AG04449 (cell line): ENCODE measurements at regions of chr13 and their contacts with region 1.

Region 1: DNA sequence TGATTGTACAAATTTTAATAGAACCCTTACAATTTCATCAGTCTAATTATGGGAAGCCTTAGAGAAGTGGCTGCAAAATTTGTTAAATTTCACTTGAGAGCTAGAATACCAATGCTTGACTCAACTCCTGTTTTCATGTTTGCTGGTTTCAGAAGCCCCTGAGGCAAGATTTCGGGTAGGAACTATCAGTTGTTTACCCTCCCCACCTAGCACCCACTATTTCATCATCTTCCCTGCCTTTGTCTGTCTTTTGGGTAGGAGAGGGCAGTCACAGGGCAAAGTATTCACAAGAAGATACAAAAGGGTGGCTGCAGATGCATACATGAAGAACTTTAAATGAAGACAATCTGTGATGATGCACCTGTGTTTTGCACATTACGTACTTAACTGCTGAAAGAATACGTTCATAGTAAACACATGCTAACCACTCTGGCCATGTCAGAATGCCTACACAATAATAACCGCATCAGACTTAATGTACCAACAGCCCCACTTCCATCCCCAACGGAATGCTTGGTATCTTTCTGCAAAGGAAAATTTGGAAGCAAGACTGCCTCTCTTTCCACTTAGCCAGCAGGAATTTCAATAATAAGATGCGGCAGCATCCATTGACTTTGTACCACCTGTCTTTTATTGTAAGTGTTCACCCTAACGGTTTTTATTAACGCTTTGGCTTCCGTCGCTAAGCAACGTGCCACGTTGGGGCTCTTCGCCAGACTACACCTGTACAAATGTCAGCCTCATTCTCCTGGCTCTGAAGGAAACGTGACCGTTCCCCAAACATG is 30.4 kb downstream of the TPT1 start:
- DNase-seq: no peak
- H3K4me3 ChIP-seq: peak overlapping the region; percentile 23; the same call in 1 of the 2 replicates
- CTCF ChIP-seq: no peak

Region 2: DNA sequence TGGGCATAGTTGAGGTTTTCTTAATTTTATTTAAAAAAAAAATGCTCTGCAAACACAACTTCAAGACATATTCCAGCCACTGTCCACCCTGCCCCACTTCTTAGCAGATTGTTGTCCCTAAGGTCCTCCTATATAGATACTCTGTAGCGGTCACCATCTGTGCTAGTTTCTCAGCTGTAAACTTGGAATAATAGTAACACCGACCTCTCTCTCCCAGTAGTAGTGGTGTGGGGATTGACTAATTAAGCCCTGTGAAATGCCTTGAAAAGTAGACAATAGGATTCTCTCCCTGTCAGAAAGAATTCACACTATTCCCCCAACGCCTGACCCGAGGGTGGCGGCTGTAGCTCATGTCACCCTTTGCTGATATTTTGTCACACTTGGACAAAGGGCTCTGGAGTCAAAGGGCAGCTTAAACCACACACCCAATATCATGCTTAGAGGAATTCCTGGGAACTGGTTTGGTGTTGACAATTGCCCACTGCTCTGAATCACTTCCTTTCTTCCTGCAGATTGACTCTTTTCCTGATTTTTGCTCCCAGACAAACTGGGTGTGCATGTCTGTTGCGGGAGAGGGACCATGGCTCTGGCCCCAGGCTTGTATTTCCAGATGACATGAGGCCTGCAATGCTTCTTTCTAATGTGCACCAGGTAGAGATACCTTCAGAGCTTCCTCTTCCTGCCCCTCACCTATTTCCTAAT is 946.0 kb before region 1 on chr13:
- CTCF ChIA-PET with region 1: no interaction called
- POLR2A ChIA-PET with region 1: no interaction called
- DNase-seq: no peak
- H3K4me3 ChIP-seq: no peak overlapping the region
- CTCF ChIP-seq: no peak

Region 3: DNA sequence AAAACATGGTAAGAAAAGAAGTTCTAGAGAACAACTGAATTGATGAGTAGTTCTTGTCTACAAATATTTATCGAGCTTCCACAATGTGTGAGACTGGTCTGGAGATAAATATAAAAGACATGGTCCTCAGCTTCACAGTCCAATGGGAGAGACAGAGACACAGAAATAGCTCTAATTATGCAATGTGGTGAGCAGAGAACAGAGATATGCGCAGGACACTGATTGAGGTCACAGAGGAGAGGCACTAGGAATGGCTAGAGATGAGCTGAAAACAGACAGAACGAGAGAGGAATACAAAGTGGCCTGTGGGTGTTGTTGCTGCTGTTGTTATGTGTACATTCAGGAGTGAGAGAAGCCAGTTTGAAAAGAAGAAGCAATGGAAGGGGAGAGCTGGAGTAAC is 268.0 kb before region 1 on chr13:
- CTCF ChIA-PET with region 1: interaction called, 179 read pairs
- POLR2A ChIA-PET with region 1: no interaction called
- DNase-seq: no peak
- H3K4me3 ChIP-seq: no peak overlapping the region
- CTCF ChIP-seq: no peak

Region 4: DNA sequence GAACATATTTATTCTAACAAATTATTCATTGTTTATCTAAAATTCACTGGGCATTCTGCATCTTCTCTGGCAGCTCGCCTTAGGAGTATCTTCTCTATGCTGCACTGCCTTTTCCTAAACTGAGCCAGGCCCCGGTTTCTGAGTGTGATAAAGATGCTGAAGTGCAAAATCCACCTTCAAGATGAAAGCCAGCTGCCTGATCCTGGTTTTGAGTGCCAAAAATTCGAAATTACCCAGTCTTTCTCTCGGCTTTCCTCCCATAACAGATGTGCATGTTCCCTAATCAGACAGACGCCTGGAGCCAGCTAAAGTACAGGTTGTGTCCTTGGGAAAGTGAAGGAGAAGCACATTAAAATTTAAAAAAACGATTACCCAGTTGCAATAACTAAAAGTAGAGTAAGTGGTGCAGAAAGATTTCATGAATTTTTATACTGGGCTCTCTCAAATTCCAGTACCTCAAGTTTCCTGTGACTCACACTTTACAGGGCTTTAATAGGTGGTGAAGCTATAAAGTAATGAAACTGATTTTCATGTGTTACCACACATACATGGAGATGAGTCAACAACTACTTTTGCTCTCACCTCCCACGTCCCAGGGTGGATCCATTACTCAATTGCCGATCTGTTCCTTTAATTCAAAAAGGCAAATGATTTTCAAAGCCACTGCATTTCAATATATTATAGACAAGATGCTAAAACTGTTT is 255.2 kb before region 1 on chr13:
- CTCF ChIA-PET with region 1: interaction called, 179 read pairs
- POLR2A ChIA-PET with region 1: no interaction called
- DNase-seq: peak; percentile 80
- H3K4me3 ChIP-seq: peak overlapping the region; percentile 38
- CTCF ChIP-seq: no peak

Region 5: DNA sequence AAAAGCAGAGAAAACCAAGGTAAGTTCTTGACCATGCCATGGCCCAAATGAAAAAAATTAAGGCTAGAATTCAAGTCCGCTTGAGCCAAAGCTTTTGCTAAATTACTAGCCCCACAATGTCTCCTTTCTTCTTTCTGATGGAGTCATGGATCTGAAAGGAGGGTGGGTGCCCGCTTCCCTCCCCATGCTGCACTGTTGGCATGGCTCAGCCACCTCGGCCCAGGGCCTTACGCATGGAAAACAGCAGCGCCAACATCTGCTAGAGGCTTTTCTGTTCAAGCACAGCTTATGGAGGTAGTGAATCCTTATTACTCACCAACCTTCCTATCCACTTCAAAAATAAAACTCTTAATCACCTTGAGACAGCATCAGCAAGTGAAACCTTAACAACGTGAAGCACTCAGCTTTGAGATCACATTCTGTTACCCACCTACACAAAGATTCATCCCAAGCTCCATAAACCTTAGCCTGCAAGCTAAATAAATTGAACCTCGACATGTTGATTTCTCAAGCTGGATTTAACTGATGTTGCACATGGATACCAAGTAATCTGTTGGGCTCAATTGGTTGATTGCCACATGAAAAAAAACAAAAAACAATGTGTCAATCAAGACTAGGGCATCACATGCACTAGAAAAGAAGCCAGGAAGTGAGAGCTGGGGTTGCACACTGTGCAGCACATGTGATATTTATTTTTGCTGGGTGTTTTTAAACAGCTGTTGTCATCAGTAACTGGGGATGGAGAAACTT is 12.9 kb before region 1 on chr13:
- CTCF ChIA-PET with region 1: interaction called, 48 read pairs
- POLR2A ChIA-PET with region 1: no interaction called
- DNase-seq: no peak
- H3K4me3 ChIP-seq: no peak overlapping the region
- CTCF ChIP-seq: no peak